GM10248 (cell line): ENCODE measurements at regions of chr20 and their contacts with region 1.

Region 1: GRCh38 chr20:31723319-31724078 is 831 bp upstream of the BCL2L1 start:
- DNase-seq: peak; percentile 100
- CTCF ChIP-seq: peak; percentile 85

Region 2: GRCh38 chr20:31605031-31605901 is 118.2 kb before region 1 on chr20 and contains the start of gene ID1:
- CTCF ChIA-PET with region 1: interaction called, 15 read pairs
- POLR2A ChIA-PET with region 1: no interaction called
- DNase-seq: peak; percentile 91
- CTCF ChIP-seq: no peak

Region 3: GRCh38 chr20:31652917-31653396 is 70.5 kb before region 1 on chr20:
- CTCF ChIA-PET with region 1: interaction called, 429 read pairs
- POLR2A ChIA-PET with region 1: no interaction called
- DNase-seq: no peak
- CTCF ChIP-seq: no peak

Region 4: GRCh38 chr20:31684153-31685015 is 39.1 kb before region 1 on chr20:
- CTCF ChIA-PET with region 1: interaction called, 65 read pairs
- POLR2A ChIA-PET with region 1: interaction called, 4 read pairs
- DNase-seq: no peak
- CTCF ChIP-seq: no peak

Region 5: GRCh38 chr20:31712564-31713311 is 10.8 kb before region 1 on chr20:
- CTCF ChIA-PET with region 1: interaction called, 52 read pairs
- POLR2A ChIA-PET with region 1: no interaction called
- DNase-seq: no peak
- CTCF ChIP-seq: no peak